PC-3 (cell line): ENCODE measurements at regions of chr13 and their contacts with region 1.

Region 1: DNA sequence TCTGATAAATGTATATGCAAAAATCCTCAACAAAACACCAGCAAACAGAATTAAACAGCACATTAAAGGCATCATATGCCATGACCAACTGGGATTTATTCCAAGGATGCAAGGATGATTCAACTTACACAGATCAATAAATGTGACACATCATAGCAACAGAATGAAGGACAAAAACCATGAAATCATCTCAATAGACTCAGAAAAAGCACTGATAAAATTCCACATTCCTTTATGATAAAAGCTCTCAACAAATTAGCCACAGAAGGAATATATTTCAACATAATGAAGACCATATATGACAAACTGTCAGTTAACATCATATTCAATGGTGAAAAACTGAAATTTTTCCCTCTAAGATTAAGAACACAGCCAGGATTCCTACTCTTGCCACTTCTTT is 691.6 kb downstream of the DIAPH3 start:
- DNase-seq: peak; percentile 72
- ATAC-seq: peak; percentile 81
- H3K4me3 ChIP-seq: no peak overlapping the region
- H3K27ac ChIP-seq: peak overlapping the region; percentile 58
- H3K4me1 ChIP-seq: peaks cover 17% of the 10 kb centered on the region
- H3K27me3 ChIP-seq: no peaks in the 10 kb centered on the region
- CTCF ChIP-seq: no peak

Region 2: GRCh38 chr13:59364641-59365085 is 107.5 kb before region 1 on chr13:
- CTCF ChIA-PET with region 1: no interaction called
- POLR2A ChIA-PET with region 1: no interaction called
- intact Hi-C with region 1: no loop called
- DNase-seq: no peak
- ATAC-seq: no peak
- H3K4me3 ChIP-seq: no peak overlapping the region
- H3K27ac ChIP-seq: no peak overlapping the region
- H3K4me1 ChIP-seq: no peaks in the 10 kb centered on the region
- H3K27me3 ChIP-seq: peaks cover 43% of the 10 kb centered on the region
- CTCF ChIP-seq: no peak

Region 3: GRCh38 chr13:59531571-59532091 is 59.5 kb after region 1 on chr13:
- CTCF ChIA-PET with region 1: no interaction called
- POLR2A ChIA-PET with region 1: no interaction called
- intact Hi-C with region 1: loop called (anchors 1 kb)
- DNase-seq: peak; percentile 77
- ATAC-seq: peak; percentile 60
- H3K4me3 ChIP-seq: no peak overlapping the region
- H3K27ac ChIP-seq: peak overlapping the region; percentile 54
- H3K4me1 ChIP-seq: peaks cover 37% of the 10 kb centered on the region
- H3K27me3 ChIP-seq: no peaks in the 10 kb centered on the region
- CTCF ChIP-seq: no peak

Region 4: GRCh38 chr13:59658027-59658737 is 186.0 kb after region 1 on chr13:
- CTCF ChIA-PET with region 1: no interaction called
- POLR2A ChIA-PET with region 1: no interaction called
- intact Hi-C with region 1: no loop called
- DNase-seq: no peak
- ATAC-seq: no peak
- H3K4me3 ChIP-seq: no peak overlapping the region
- H3K27ac ChIP-seq: no peak overlapping the region
- H3K4me1 ChIP-seq: no peaks in the 10 kb centered on the region
- H3K27me3 ChIP-seq: no peaks in the 10 kb centered on the region
- CTCF ChIP-seq: no peak